Activated CD4-positive, alpha-beta memory T cell treated with anti-CD3 and anti-CD28 coated beads for 36 hours (primary cell): ENCODE measurements at regions of chr4 and their contacts with region 1.

Region 1: GRCh38 chr4:11748164-11748872 is 319.6 kb upstream of the HS3ST1 start:
- DNase-seq: no peak
- H3K4me3 Mint-ChIP-seq: no peak overlapping the region
- H3K27ac Mint-ChIP-seq: no peak overlapping the region
- H3K4me1 Mint-ChIP-seq: no peaks in the 10 kb centered on the region
- H3K27me3 Mint-ChIP-seq: peaks cover 7% of the 10 kb centered on the region

Region 2: GRCh38 chr4:11814758-11815157 is 66.4 kb after region 1 on chr4:
- CTCF ChIA-PET with region 1: no interaction called
- POLR2A ChIA-PET with region 1: no interaction called
- intact Hi-C with region 1: loop called (anchors 2 kb)
- DNase-seq: no peak
- H3K4me3 Mint-ChIP-seq: no peak overlapping the region
- H3K27ac Mint-ChIP-seq: no peak overlapping the region
- H3K4me1 Mint-ChIP-seq: no peaks in the 10 kb centered on the region
- H3K27me3 Mint-ChIP-seq: no peaks in the 10 kb centered on the region